Ovary (tissue), 10 donors: ENCODE measurements at regions of chr1 and their contacts with region 1.

Region 1: GRCh38 chr1:15803354-15803753 is 4.1 kb downstream of the UQCRHL start:
- DNase-seq: peak in 1 of 5 donors; percentile 41
- H3K4me3 ChIP-seq: no peak overlapping the region
- H3K27ac ChIP-seq: no peak overlapping the region
- H3K4me1 ChIP-seq: peaks cover 4% of the 10 kb centered on the region
- H3K27me3 ChIP-seq: no peaks in the 10 kb centered on the region
- CTCF ChIP-seq: peak; percentile 12 to 29 (median 27)
- EP300 ChIP-seq: no peak
- POLR2A ChIP-seq: no peak

Region 2: DNA sequence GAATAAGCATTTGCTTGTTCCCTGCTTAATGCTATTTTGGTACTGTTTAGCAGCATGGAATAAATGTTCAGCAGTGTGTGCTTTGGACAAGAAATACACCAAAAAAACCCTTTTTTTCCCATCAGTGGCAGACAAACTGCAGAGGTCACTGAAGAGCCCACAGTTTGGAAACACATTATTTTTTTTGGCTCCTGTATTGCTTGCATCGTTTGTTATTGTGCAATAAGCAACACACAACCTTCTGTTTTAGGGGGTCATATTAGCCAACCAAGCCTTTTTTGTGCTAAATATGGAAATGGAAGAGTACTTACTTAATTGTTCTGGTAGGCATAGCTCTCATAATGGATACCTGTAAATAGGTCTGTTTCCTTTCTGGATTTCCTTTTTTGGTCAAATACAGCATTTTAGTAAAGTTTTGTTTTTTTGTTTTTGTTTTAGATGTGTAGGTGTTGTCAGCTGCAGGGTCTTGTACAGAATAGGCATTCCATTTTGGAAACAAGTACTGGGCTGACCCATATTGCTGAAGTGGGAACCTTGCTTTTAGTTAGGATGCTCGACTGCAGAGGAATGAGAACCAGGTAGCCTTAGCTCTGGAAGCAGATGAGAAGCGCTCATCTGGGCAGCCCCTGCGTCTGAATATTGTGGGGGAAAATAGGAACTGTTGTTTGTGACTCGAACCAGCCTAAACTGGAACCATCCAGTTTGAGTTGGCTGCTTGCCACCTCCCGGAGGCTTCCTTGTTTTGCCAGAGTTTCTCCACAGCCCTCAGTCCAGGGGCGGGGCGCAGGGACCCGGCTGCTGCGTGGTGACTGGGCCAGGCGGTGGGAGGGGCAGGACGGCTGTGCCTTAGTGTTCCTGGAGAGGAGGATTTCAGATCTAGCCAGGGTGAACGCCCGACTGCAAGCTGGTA is 82.6 kb after region 1 on chr1:
- intact Hi-C with region 1: loop called in 1 of 4 experiments (anchors 5 kb)
- DNase-seq: peak; percentile 99
- H3K4me3 ChIP-seq: peak overlapping the region; percentile 42
- H3K27ac ChIP-seq: peak overlapping the region; percentile 82 to 96
- H3K4me1 ChIP-seq: peaks cover 7% of the 10 kb centered on the region
- H3K27me3 ChIP-seq: no peaks in the 10 kb centered on the region
- CTCF ChIP-seq: peak in 2 of 3 donors; percentile 53 to 57
- EP300 ChIP-seq: peak; percentile 92
- POLR2A ChIP-seq: peak; percentile 53

Region 3: DNA sequence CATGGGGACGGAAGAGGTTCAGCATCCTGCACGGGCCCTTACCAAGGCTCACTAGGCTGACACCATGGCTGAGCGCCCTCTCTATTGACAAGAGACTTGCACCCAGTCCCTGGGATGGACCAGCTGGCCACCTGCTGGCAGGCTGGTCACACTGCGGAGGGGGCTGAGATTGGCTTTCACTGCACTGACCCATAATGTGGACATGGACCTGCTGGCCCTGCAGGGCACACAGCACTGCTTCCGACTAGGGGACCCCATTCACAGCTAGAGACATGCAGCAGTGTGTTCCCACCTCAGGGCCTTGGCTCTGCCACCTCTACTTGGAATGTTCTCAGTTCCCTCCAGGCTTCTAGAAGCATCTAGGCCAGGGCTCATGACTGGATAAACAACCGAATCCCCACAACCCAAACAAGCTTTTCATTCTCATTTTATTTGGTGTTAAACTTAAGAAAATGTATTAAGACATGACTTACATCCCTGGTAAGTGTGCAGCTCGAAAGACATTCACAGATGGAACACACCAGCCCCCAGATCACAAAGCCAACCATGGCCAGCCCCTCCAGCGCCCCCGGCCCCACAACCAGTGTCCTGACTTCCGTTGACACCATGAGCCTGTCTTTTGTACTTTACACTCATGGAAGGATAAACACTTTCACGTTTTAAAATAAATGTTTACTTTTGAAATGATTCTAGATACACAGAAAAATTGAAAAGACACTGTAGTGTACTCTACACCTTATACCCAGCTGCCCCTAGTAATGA is 191.4 kb after region 1 on chr1:
- intact Hi-C with region 1: loop called in 2 of 4 experiments (anchors 10 kb)
- DNase-seq: peak; percentile 57 to 71 (median 68)
- H3K4me3 ChIP-seq: no peak overlapping the region
- H3K27ac ChIP-seq: no peak overlapping the region
- H3K4me1 ChIP-seq: no peaks in the 10 kb centered on the region
- H3K27me3 ChIP-seq: no peaks in the 10 kb centered on the region
- CTCF ChIP-seq: peak; percentile 23 to 88 (median 80)
- EP300 ChIP-seq: no peak
- POLR2A ChIP-seq: no peak

Region 4: DNA sequence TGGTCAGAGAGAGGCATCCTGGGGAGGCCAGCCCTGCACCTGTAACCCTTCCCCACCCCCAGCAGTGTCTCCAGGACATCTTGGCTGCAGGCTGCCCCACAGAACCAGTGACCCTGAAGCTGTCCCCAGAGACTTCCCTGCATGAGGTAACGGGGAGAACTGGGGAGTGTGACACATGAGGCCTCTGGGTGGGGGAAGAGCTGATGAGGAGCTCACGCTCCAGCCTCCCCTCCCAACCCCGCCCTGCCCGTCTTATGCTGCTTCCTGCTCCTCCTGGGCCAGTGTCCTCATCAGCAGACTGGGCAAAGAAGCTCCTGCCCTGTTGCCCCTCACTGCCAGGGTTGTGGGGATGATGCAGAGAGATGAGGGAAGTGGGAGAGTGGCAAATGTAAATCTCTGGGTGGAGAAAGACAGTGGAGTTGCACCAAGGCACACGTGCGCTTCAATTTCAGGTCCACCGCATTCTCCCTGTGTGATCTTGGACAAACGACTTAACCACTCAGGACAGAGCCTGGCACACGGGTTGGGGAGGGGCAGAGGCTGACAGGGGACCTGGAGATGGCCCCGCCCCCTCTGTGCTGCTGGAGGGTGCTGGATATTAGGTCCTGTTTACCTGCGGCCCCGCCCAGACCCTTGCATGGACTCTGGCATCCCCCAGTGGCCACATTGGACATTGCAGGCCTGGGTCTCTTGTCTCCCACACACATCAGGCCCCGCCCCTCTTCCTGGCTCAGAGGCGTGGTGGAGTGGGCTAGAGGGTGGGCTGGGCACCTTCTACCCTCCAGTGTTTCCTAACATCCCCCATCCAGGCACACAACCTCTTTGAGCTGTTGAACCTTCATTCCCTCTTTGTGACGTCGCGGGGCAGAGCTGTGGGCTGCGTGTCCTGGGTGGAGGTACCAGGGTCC is 252.5 kb after region 1 on chr1:
- intact Hi-C with region 1: loop called in 1 of 4 experiments (anchors 5 kb)
- DNase-seq: peak; percentile 82 to 91 (median 89)
- H3K4me3 ChIP-seq: no peak overlapping the region
- H3K27ac ChIP-seq: no peak overlapping the region
- H3K4me1 ChIP-seq: no peaks in the 10 kb centered on the region
- H3K27me3 ChIP-seq: no peaks in the 10 kb centered on the region
- CTCF ChIP-seq: peak; percentile 92 to 96 (median 96)
- EP300 ChIP-seq: no peak
- POLR2A ChIP-seq: no peak